ENCODE measurements at regions of chr2 and their contacts with region 1.

Region 1: GRCh38 chr2:128736689-128737545 is 418.2 kb upstream of the HS6ST1 start:
- DNase-seq: peak; percentile 57
- H3K4me3 Mint-ChIP-seq: peak overlapping the region; percentile 66
- H3K27ac Mint-ChIP-seq: no peak overlapping the region
- H3K4me1 Mint-ChIP-seq: peaks cover 16% of the 10 kb centered on the region
- H3K27me3 Mint-ChIP-seq: peaks cover 54% of the 10 kb centered on the region

Region 2: GRCh38 chr2:128754246-128754724 is 17.4 kb after region 1 on chr2:
- intact Hi-C with region 1: loop called (anchors 2 kb)
- DNase-seq: peak; percentile 33
- H3K4me3 Mint-ChIP-seq: no peak overlapping the region
- H3K27ac Mint-ChIP-seq: no peak overlapping the region
- H3K4me1 Mint-ChIP-seq: peaks cover 16% of the 10 kb centered on the region
- H3K27me3 Mint-ChIP-seq: peaks cover 24% of the 10 kb centered on the region

Region 3: DNA sequence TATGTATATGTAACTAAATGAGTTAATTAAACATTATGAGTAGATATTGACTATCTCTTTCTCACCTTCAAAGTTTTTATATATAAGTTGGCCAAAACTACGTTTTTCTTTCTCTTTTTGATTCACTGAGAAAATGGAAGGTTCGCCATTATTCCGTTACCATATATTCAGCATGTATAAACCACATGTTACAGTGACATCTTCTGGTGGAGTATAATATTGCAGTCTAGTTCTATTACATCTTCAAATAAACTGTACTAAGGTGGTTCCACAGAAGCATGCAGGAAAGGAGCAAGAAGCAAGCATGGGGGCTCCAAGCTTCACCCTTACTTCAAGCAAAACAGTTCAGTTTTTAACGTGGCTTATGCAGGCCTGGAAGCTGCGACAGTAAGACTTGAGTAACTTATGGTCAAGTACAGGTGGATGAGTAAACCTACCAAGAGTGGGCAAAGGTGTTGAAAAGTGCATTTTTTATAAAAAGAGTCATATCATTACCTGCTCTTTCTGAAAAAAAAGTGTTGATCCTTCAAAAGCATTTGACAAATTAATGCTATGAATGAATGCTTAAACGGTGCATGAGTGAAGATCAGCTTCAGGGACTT is 1112.7 kb after region 1 on chr2:
- intact Hi-C with region 1: loop called (anchors 10 kb)
- DNase-seq: no peak
- H3K4me3 Mint-ChIP-seq: no peak overlapping the region
- H3K27ac Mint-ChIP-seq: no peak overlapping the region
- H3K4me1 Mint-ChIP-seq: no peaks in the 10 kb centered on the region
- H3K27me3 Mint-ChIP-seq: peaks cover 4% of the 10 kb centered on the region